ENCODE measurements at regions of chr19 and their contacts with region 1.

Region 1: GRCh38 chr19:8580710-8581281 is 3.6 kb upstream of the MYO1F start:
- DNase-seq: peak; percentile 90
- ATAC-seq: peak; percentile 44
- H3K4me3 Mint-ChIP-seq: no peak overlapping the region
- H3K27ac Mint-ChIP-seq: no peak overlapping the region
- H3K4me1 Mint-ChIP-seq: peaks cover 28% of the 10 kb centered on the region
- H3K27me3 Mint-ChIP-seq: peaks cover 7% of the 10 kb centered on the region

Region 2: DNA sequence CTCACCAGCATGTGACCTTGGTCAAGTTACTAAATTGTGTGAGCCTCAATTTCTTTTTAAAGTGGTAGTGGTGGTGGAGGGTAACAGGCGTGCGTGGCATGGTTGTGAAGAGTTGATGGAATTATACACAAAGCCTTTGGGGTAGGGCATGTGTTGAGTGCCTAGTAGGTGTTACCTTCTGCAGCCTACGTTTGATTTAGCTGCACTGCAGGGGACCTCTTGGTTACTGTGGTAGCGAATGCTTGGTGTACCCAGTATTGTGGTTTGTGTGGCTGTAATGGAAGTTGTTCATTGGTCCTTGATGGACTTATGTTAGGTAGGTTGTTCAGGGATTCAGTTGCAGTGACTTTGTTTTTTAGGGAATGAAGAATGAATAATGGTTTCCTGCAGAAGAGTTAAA is 102.9 kb before region 1 on chr19:
- CTCF ChIA-PET with region 1: interaction called, 16 read pairs
- DNase-seq: no peak
- ATAC-seq: no peak
- H3K4me3 Mint-ChIP-seq: no peak overlapping the region
- H3K27ac Mint-ChIP-seq: peak overlapping the region; percentile 54
- H3K4me1 Mint-ChIP-seq: peaks cover 65% of the 10 kb centered on the region
- H3K27me3 Mint-ChIP-seq: no peaks in the 10 kb centered on the region

Region 3: GRCh38 chr19:8513687-8514504 is 66.9 kb before region 1 on chr19 and contains the start of gene ZNF414:
- CTCF ChIA-PET with region 1: interaction called, 136 read pairs
- DNase-seq: peak; percentile 97
- ATAC-seq: peak; percentile 85
- H3K4me3 Mint-ChIP-seq: peak within 1 kb of the TSS; percentile 80
- H3K27ac Mint-ChIP-seq: peak within 1 kb of the TSS; percentile 98
- H3K4me1 Mint-ChIP-seq: peaks cover 58% of the 10 kb centered on the region
- H3K27me3 Mint-ChIP-seq: no peaks in the 10 kb centered on the region
- total RNA-seq, gene ZNF414: 23.8 to 38.5 TPM

Region 4: GRCh38 chr19:8569066-8569771 is 11.6 kb before region 1 on chr19:
- CTCF ChIA-PET with region 1: interaction called, 216 read pairs
- DNase-seq: peak; percentile 94
- ATAC-seq: peak; percentile 81
- H3K4me3 Mint-ChIP-seq: peak overlapping the region; percentile 67
- H3K27ac Mint-ChIP-seq: peak overlapping the region; percentile 97
- H3K4me1 Mint-ChIP-seq: peaks cover 81% of the 10 kb centered on the region
- H3K27me3 Mint-ChIP-seq: no peaks in the 10 kb centered on the region

Region 5: GRCh38 chr19:8641908-8642547 is 61.2 kb after region 1 on chr19:
- CTCF ChIA-PET with region 1: interaction called, 13 read pairs
- DNase-seq: no peak
- ATAC-seq: no peak
- H3K4me3 Mint-ChIP-seq: no peak overlapping the region
- H3K27ac Mint-ChIP-seq: no peak overlapping the region
- H3K4me1 Mint-ChIP-seq: peaks cover 10% of the 10 kb centered on the region
- H3K27me3 Mint-ChIP-seq: peaks cover 11% of the 10 kb centered on the region

Measured in activated CD8-positive, alpha-beta memory T cell treated with anti-CD3 and anti-CD28 coated beads, Interleukin-2, amount 10 ng/mL, durations not matched to agents 7 days and 5 days (primary cell).